Activated CD4-positive, alpha-beta memory T cell treated with anti-CD3 and anti-CD28 coated beads for 36 hours (primary cell): ENCODE measurements at regions of chr3 and their contacts with region 1.

Region 1: DNA sequence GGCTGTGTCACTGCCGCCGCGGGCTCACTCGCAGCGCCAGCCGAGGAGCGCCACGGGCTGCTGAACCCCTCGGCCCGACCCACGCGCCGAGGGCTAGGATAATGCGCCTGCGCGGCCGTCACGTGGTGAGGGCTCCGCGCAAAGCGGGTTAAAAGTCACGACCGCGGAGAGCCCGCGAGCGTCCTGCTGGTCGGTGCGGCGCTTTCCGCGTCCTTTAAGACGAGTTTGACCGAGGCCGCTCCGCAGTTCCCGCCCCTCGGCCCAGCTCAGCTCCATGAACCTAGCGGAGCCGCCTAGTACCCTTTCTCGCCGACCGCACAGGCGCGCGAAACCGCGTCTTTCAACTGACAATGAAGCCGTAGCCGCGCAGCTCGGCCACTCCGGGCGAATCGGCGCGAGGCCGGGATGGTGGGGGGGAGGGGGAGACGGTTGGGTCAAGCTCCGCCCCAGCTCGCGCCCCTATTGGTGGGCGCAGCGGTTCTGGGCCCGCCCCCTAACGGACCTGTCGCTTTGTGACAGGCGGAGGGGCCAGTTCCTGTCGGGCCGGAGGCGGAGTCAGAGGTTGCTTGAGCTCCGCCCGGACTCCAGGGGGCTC is 636 bp upstream of the STT3B start:
- DNase-seq: peak; percentile 99
- H3K4me3 Mint-ChIP-seq: peak overlapping the region; percentile 97
- H3K27ac Mint-ChIP-seq: peak overlapping the region; percentile 99
- H3K4me1 Mint-ChIP-seq: peaks cover 11% of the 10 kb centered on the region
- H3K27me3 Mint-ChIP-seq: no peaks in the 10 kb centered on the region

Region 2: GRCh38 chr3:30804984-30805383 is 727.1 kb before region 1 on chr3:
- CTCF ChIA-PET with region 1: no interaction called
- POLR2A ChIA-PET with region 1: no interaction called
- intact Hi-C with region 1: no loop called
- DNase-seq: no peak
- H3K4me3 Mint-ChIP-seq: no peak overlapping the region
- H3K27ac Mint-ChIP-seq: no peak overlapping the region
- H3K4me1 Mint-ChIP-seq: peaks cover 6% of the 10 kb centered on the region
- H3K27me3 Mint-ChIP-seq: peaks cover 2% of the 10 kb centered on the region

Region 3: GRCh38 chr3:31105438-31106077 is 426.5 kb before region 1 on chr3:
- CTCF ChIA-PET with region 1: interaction called, 3 read pairs
- POLR2A ChIA-PET with region 1: interaction called, 7 read pairs
- intact Hi-C with region 1: loop called (anchors 5 kb)
- DNase-seq: peak; percentile 51
- H3K4me3 Mint-ChIP-seq: no peak overlapping the region
- H3K27ac Mint-ChIP-seq: no peak overlapping the region
- H3K4me1 Mint-ChIP-seq: peaks cover 37% of the 10 kb centered on the region
- H3K27me3 Mint-ChIP-seq: no peaks in the 10 kb centered on the region

Region 4: DNA sequence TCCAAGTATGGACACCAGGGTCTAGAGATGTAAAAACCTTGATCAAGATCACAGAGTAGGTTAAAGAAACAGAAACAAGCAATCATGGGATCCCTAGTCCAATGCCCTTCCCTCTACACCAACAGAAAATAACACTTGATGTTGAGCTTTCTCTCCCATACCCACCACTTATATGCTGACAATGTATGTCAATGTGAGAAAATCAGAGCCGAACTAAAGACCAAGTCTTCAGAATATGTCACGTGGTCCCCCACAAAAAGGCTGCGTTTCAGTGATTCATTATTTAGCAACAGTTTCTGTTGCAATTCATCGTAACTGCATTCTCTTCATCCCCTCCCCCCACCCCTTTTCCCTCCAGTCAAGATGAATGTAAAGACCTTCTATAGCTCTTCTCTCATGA is 278.3 kb before region 1 on chr3:
- CTCF ChIA-PET with region 1: no interaction called
- POLR2A ChIA-PET with region 1: interaction called, 25 read pairs
- intact Hi-C with region 1: loop called (anchors 1 kb)
- DNase-seq: peak; percentile 62
- H3K4me3 Mint-ChIP-seq: peak overlapping the region; percentile 30
- H3K27ac Mint-ChIP-seq: peak overlapping the region; percentile 96
- H3K4me1 Mint-ChIP-seq: peaks cover 62% of the 10 kb centered on the region
- H3K27me3 Mint-ChIP-seq: no peaks in the 10 kb centered on the region

Region 5: GRCh38 chr3:31448035-31448881 is 83.8 kb before region 1 on chr3:
- CTCF ChIA-PET with region 1: no interaction called
- POLR2A ChIA-PET with region 1: no interaction called
- intact Hi-C with region 1: no loop called
- DNase-seq: peak; percentile 55
- H3K4me3 Mint-ChIP-seq: no peak overlapping the region
- H3K27ac Mint-ChIP-seq: peak overlapping the region; percentile 23
- H3K4me1 Mint-ChIP-seq: peaks cover 21% of the 10 kb centered on the region
- H3K27me3 Mint-ChIP-seq: no peaks in the 10 kb centered on the region

Region 6: GRCh38 chr3:31462050-31462569 is 70.0 kb before region 1 on chr3:
- CTCF ChIA-PET with region 1: interaction called, 3 read pairs
- POLR2A ChIA-PET with region 1: interaction called, 4 read pairs
- intact Hi-C with region 1: loop called (anchors 2 kb)
- DNase-seq: peak; percentile 47
- H3K4me3 Mint-ChIP-seq: peak overlapping the region; percentile 30
- H3K27ac Mint-ChIP-seq: peak overlapping the region; percentile 16
- H3K4me1 Mint-ChIP-seq: peaks cover 62% of the 10 kb centered on the region
- H3K27me3 Mint-ChIP-seq: no peaks in the 10 kb centered on the region

Region 7: GRCh38 chr3:31550452-31551251 is 18.6 kb after region 1 on chr3:
- CTCF ChIA-PET with region 1: interaction called, 10 read pairs
- POLR2A ChIA-PET with region 1: interaction called, 11 read pairs
- intact Hi-C with region 1: no loop called
- DNase-seq: no peak
- H3K4me3 Mint-ChIP-seq: no peak overlapping the region
- H3K27ac Mint-ChIP-seq: peak overlapping the region; percentile 33
- H3K4me1 Mint-ChIP-seq: peaks cover 74% of the 10 kb centered on the region
- H3K27me3 Mint-ChIP-seq: no peaks in the 10 kb centered on the region

Region 8: DNA sequence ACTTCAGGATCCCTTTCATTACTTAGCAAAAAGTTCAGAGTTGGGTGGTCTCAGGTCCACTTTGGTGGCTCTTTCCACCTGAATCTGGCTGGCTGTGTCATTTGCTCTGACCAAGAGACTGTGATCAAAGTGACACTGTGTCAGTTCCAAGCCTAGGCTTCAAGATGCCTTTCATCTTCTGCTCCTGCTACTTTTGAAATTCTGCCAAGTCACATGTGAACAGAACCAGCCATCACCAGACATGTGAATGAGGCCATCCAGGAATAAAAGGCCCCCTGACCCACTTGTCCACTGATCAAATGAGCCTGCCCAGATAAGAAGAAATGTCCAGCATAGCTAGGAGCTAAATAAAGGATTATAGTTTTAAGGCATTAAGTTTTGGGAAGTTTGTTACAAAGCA is 316.8 kb after region 1 on chr3:
- CTCF ChIA-PET with region 1: no interaction called
- POLR2A ChIA-PET with region 1: no interaction called
- intact Hi-C with region 1: no loop called
- DNase-seq: no peak
- H3K4me3 Mint-ChIP-seq: no peak overlapping the region
- H3K27ac Mint-ChIP-seq: no peak overlapping the region
- H3K4me1 Mint-ChIP-seq: no peaks in the 10 kb centered on the region
- H3K27me3 Mint-ChIP-seq: peaks cover 2% of the 10 kb centered on the region

Region 9: DNA sequence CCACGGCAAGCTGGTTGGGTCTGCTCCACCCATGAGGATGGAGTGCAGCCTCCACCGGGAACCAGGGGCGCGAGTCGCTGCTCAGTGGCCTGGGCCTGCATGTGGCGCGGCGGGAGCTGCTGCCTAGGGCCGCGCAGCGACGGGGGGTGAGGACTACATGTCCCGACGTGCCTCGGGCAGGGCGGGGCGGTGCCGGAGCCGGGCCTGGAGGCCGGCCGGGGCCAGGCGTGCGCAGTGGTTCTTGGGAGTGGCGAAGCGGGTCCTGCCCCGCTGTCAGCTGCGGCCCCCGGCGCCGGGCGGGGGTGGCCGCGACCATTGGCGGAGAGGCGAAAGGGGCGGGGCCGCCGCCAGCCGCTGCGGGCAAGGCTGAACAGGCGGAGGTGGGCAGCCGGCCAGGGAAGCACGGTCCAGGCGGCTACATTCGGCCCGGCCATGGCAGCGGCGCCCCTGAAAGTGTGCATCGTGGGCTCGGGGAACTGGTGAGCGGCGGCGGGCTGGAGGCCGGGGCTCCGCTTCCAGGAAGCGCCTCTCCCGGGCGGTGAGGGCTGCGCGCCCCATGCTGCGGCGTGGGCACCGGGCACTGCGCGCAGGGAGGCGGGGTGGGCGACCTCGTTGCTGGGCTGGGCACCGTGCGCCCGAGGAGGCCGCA is 574.3 kb after region 1 on chr3 and contains the start of gene GPD1L:
- CTCF ChIA-PET with region 1: interaction called, 4 read pairs
- POLR2A ChIA-PET with region 1: no interaction called
- intact Hi-C with region 1: loop called (anchors 2 kb)
- DNase-seq: peak; percentile 95
- H3K4me3 Mint-ChIP-seq: peak within 1 kb of the TSS; percentile 94
- H3K27ac Mint-ChIP-seq: peak within 1 kb of the TSS; percentile 76
- H3K4me1 Mint-ChIP-seq: peaks cover 37% of the 10 kb centered on the region
- H3K27me3 Mint-ChIP-seq: no peaks in the 10 kb centered on the region
- total RNA-seq, gene GPD1L: 10.9 to 12.2 TPM